ENCODE measurements at regions of chr1 and their contacts with region 1.

Region 1: GRCh38 chr1:221741711-221742554 is at the start of gene DUSP10:
- DNase-seq: peak; percentile 93
- ATAC-seq: peak; percentile 81
- H3K4me3 Mint-ChIP-seq: no peak within 1 kb of the TSS
- H3K27ac Mint-ChIP-seq: peak within 1 kb of the TSS; percentile 88
- H3K4me1 Mint-ChIP-seq: peaks cover 33% of the 10 kb centered on the region
- H3K27me3 Mint-ChIP-seq: no peaks in the 10 kb centered on the region
- total RNA-seq, gene DUSP10: 14.8 to 15.7 TPM

Region 2: GRCh38 chr1:221689138-221689537 is 52.8 kb before region 1 on chr1:
- POLR2A ChIA-PET with region 1: interaction called, 10 read pairs
- DNase-seq: no peak
- ATAC-seq: peak; percentile 74
- H3K4me3 Mint-ChIP-seq: no peak overlapping the region
- H3K27ac Mint-ChIP-seq: peak overlapping the region; percentile 70
- H3K4me1 Mint-ChIP-seq: peaks cover 12% of the 10 kb centered on the region
- H3K27me3 Mint-ChIP-seq: no peaks in the 10 kb centered on the region

Region 3: GRCh38 chr1:221718381-221719277 is 23.3 kb before region 1 on chr1:
- POLR2A ChIA-PET with region 1: interaction called, 159 read pairs
- DNase-seq: no peak
- ATAC-seq: no peak
- H3K4me3 Mint-ChIP-seq: no peak overlapping the region
- H3K27ac Mint-ChIP-seq: no peak overlapping the region
- H3K4me1 Mint-ChIP-seq: peaks cover 66% of the 10 kb centered on the region
- H3K27me3 Mint-ChIP-seq: no peaks in the 10 kb centered on the region

Region 4: GRCh38 chr1:221777431-221778072 is 35.6 kb after region 1 on chr1:
- POLR2A ChIA-PET with region 1: interaction called, 20 read pairs
- DNase-seq: no peak
- ATAC-seq: peak; percentile 63
- H3K4me3 Mint-ChIP-seq: peak overlapping the region; percentile 55
- H3K27ac Mint-ChIP-seq: peak overlapping the region; percentile 93
- H3K4me1 Mint-ChIP-seq: peaks cover 72% of the 10 kb centered on the region
- H3K27me3 Mint-ChIP-seq: no peaks in the 10 kb centered on the region

Measured in activated naive CD8-positive, alpha-beta T cell treated with anti-CD3 and anti-CD28 coated beads, Interleukin-2, amount 10 ng/mL, durations not matched to agents 7 days and 5 days (primary cell).